Mammary epithelial cell (primary cell): ENCODE measurements at regions of chr16 and their contacts with region 1.

Region 1: DNA sequence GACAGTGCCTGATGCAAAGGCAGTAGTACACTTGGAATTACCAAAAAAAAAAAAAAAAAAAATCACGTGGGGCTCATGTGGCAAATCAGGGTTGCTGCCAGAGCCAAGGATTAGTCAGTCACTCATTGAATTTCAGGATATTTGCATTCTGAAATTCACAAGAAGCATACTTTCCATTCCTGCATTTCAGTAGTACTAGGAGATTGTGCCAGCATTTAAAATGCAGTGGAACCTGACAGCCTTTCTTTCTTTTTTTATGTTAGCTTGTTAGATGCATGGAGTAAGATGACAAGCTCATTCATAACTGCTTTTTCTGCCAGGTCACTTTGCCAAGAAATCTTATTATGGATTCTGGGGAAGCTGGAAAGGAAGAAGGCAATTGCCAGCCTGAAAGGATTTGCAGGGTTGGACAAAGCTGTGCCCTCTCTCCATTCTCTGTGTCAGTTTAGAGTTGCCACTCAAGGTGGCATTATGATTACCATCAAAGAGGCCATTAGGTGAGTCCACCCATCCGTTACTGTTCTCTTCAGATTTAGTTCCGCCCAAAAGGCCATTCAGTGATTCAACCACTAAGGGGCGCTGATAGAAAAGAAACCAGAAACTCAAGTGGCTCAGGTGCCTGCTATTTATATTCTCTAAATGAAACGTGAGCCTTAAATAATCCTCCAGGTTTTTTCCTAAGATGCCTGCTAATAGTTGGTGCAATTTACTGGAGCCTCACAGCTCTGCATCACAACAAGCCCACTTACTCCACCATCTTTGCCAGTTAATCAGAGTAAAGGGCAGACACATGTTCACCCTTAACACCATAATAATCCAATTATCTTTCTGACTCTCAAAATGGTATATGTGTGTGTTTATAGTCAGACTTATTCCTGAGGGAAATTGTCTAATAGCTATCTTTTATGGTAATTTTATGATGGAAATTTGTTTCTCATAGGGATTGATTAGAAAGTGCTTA is 59.0 kb downstream of the TANGO6 start:
- DNase-seq: peak; percentile 66
- H3K4me3 ChIP-seq: no peak overlapping the region
- H3K27ac ChIP-seq: no peak overlapping the region
- H3K4me1 ChIP-seq: peaks cover 7% of the 10 kb centered on the region
- H3K27me3 ChIP-seq: no peaks in the 10 kb centered on the region
- CTCF ChIP-seq: peak; percentile 73 to 85

Region 2: DNA sequence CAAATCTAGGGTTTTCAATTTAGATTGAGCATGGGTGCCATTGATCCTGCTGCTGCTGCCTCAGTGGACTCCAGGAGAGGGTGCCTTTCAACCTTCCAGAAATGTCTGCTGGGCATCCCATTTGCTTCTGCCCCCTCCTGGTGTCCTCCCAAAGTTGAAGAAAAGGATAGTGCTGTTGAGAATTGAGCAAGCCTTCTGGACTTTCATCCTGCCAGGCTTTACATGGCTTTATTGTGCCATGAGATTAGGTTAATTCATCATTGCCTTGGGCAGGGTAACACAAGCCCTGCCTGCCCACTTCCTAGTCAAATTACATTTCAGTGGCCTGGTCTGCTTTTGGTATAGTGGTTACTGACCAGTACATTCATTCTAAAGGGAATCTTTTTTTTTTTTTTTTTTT is 76.9 kb before region 1 on chr16:
- CTCF ChIA-PET with region 1: no interaction called
- dilution Hi-C with region 1: loop called (anchors 5 kb)
- in situ Hi-C with region 1: no loop called
- intact Hi-C with region 1: no loop called
- DNase-seq: no peak
- H3K4me3 ChIP-seq: no peak overlapping the region
- H3K27ac ChIP-seq: no peak overlapping the region
- H3K4me1 ChIP-seq: peaks cover 11% of the 10 kb centered on the region
- H3K27me3 ChIP-seq: no peaks in the 10 kb centered on the region
- CTCF ChIP-seq: peak in 1 of 2 donors; percentile 20

Region 3: GRCh38 chr16:68951991-68952877 is 49.9 kb after region 1 on chr16:
- CTCF ChIA-PET with region 1: interaction called, 5 read pairs
- dilution Hi-C with region 1: no loop called
- in situ Hi-C with region 1: no loop called
- intact Hi-C with region 1: loop called (anchors 5 kb)
- DNase-seq: peak; percentile 94
- H3K4me3 ChIP-seq: no peak overlapping the region
- H3K27ac ChIP-seq: peak overlapping the region; percentile 79
- H3K4me1 ChIP-seq: peaks cover 20% of the 10 kb centered on the region
- H3K27me3 ChIP-seq: no peaks in the 10 kb centered on the region
- CTCF ChIP-seq: no peak

Region 4: GRCh38 chr16:68995011-68995504 is 92.8 kb after region 1 on chr16:
- CTCF ChIA-PET with region 1: no interaction called
- dilution Hi-C with region 1: no loop called
- in situ Hi-C with region 1: no loop called
- intact Hi-C with region 1: loop called (anchors 2 kb)
- DNase-seq: peak; percentile 98
- H3K4me3 ChIP-seq: no peak overlapping the region
- H3K27ac ChIP-seq: peak overlapping the region; percentile 92
- H3K4me1 ChIP-seq: peaks cover 76% of the 10 kb centered on the region
- H3K27me3 ChIP-seq: no peaks in the 10 kb centered on the region
- CTCF ChIP-seq: peak; percentile 8 to 59

Region 5: DNA sequence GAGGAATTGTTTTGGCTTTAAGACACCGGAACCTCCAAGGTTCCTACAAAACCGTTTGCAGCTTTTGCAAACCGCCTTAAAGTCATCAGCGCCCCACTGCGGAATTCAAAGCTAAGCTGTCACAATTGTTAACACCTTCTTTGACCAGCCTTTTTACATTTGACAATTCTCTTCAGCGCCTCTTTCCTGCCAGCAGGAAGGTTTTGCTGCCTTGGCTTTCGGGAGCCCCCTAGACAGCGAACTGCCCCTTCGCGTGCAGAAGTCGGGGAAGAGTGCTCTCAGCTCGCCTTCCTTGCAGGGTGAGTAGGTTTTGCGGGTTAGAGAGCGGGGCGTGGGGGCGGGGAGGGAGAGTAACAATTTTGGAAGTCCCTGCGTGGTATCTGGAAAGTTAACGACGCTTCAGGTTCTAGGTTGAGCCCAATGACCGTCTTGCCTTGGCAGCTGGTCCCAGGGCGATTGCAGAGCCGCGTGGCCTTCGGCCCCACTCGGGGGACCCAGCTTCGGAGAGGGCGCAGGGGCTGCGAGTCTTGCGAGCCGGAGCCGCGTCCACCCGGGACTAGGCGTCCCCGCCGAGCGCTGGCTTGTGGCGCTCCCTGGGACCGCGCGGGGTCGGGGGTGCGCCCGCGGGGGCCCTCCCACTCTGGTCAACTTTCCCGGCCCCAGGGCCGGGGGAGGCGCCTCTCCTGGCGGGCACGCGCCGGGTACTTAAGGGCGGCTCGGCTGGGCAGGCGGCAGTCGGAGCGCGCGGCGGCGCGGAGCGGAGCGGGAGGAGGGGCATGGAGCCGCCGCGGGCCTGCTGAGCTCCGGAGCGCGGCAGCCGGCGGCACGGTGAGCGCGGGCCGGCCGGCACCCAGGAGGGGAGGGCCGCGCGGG is 203.4 kb after region 1 on chr16 and contains the start of gene HAS3:
- CTCF ChIA-PET with region 1: no interaction called
- dilution Hi-C with region 1: no loop called
- in situ Hi-C with region 1: loop called (anchors 5 kb)
- intact Hi-C with region 1: loop called (anchors 1 kb)
- DNase-seq: peak; percentile 75
- H3K4me3 ChIP-seq: peak within 1 kb of the TSS; percentile 75 to 88 (median 80)
- H3K27ac ChIP-seq: no peak within 1 kb of the TSS
- H3K4me1 ChIP-seq: peaks cover 48% of the 10 kb centered on the region
- H3K27me3 ChIP-seq: no peaks in the 10 kb centered on the region
- CTCF ChIP-seq: peak; percentile 39 to 75
- total RNA-seq, gene HAS3: 38.2 to 133 TPM

Region 6: GRCh38 chr16:69123910-69124309 is 221.6 kb after region 1 on chr16:
- CTCF ChIA-PET with region 1: interaction called, 31 read pairs
- dilution Hi-C with region 1: loop called (anchors 5 kb)
- in situ Hi-C with region 1: no loop called
- intact Hi-C with region 1: loop called (anchors 1 kb)
- DNase-seq: peak; percentile 56
- H3K4me3 ChIP-seq: no peak overlapping the region
- H3K27ac ChIP-seq: no peak overlapping the region
- H3K4me1 ChIP-seq: no peaks in the 10 kb centered on the region
- H3K27me3 ChIP-seq: no peaks in the 10 kb centered on the region
- CTCF ChIP-seq: peak; percentile 42 to 71